Dorsolateral prefrontal cortex (tissue), 120 donors: ENCODE measurements at regions of chr5 and their contacts with region 1.

Region 1: DNA sequence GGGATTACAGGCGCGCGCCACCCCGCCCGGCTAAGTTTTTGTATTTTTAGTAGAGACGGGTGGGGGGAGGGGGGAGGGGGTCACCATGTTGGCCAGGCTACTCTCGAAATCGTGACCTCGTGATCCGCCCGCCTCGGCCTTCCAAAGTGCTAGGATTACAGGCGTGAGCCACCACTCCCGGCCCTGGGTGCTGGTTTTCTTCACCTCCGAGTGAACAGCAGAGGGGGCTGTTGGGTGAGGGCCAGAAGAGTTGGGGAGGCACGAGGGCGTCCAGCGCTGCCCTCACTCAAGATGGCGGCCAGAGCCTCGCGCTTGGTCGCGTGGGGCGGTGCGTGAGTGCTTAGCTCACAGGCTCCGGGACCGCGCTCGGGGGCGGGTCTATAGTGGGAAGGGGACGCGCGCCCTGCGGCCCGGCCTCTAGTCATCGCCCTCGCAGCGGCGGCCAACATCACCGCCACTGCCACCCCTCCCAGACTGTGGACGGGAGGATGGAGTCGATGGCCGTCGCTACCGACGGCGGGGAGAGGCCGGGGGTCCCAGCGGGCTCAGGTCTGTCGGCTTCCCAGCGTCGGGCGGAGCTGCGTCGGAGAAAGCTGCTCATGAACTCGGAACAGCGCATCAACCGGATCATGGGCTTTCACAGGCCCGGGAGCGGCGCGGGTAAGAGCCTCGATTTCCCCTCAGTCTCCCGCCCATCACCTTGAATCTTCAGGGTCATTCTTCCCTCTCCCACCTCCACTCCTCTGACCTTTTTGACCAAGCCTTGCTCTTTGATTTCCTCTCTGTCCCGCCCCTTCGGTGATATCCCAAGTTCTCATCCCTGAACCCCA is at the start of gene CAMLG:
- DNase-seq: peak; percentile 96 to 99 (median 97)
- H3K4me3 ChIP-seq: peak within 1 kb of the TSS; percentile 63 to 100 (median 94)
- H3K27ac ChIP-seq: peak within 1 kb of the TSS; percentile 78 to 98 (median 95)
- H3K27me3 ChIP-seq: no peaks in the 10 kb centered on the region
- CTCF ChIP-seq: peak in 50 of 56 donors; percentile 10 to 76 (median 47)
- total RNA-seq, gene CAMLG: 23.1 to 93.4 (median 48.1) TPM

Region 2: GRCh38 chr5:134304311-134304710 is 434.0 kb before region 1 on chr5:
- intact Hi-C with region 1: loop called in 1 of 2 experiments (anchors 10 kb)
- DNase-seq: no peak
- H3K4me3 ChIP-seq: no peak overlapping the region
- H3K27ac ChIP-seq: no peak overlapping the region
- H3K27me3 ChIP-seq: no peaks in the 10 kb centered on the region
- CTCF ChIP-seq: no peak

Region 3: DNA sequence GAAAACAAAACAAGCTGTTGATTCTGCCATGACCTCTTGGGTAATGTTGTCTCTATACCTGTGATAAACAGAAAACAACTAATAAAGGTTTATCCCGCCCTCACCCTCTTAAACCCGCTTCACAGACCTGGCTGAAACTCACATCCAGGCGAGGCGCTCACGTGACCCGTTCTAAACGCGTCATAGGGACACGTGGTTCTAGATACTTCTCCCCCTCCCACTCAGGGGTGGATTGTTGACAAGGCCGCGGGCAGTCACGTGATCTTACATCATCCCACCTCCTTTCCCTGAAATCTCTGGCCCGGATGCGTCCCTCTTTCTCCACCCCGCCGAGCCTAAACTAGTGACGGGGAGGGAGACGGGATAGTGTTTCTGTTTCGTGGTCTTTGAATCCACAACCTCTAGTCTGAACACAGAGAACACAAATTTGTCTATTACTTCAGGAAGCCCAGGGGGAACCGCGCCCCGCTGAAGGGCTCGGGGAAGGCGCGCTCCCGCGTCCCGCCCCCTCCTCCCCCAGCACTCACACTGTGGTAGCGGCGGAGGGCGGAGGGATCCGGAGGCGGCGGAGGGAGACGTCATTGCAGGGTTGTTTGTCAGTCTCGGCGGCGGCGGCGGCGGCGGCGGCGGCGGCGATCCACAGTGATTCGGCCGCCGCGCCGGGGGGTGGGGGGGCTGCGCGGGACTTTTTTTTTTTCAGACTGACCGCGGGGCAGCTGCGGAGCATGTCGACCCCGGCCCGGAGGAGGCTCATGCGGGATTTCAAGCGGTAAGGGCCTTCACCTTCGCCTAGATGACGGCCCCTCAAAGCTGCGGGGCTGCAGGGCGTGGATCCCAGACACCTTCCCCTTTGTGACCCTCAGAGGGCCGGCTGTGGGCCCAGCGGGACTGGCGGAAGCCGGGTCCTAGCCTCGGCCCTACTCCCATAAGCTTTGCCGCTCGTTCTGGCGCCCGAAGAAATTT is 367.2 kb before region 1 on chr5 and contains the start of gene UBE2B:
- intact Hi-C with region 1: loop called (anchors 5 kb)
- DNase-seq: peak; percentile 96 to 100 (median 99)
- H3K4me3 ChIP-seq: peak within 1 kb of the TSS; percentile 60 to 100 (median 98)
- H3K27ac ChIP-seq: peak within 1 kb of the TSS; percentile 82 to 100 (median 99)
- H3K27me3 ChIP-seq: no peaks in the 10 kb centered on the region
- CTCF ChIP-seq: peak in 14 of 56 donors; percentile 2 to 35 (median 19)
- total RNA-seq, gene UBE2B: 45.5 to 171 (median 102) TPM

Region 4: GRCh38 chr5:134758504-134759341 is 20.4 kb after region 1 on chr5 and contains the start of gene DDX46:
- intact Hi-C with region 1: loop called in 1 of 2 experiments (anchors 2 kb)
- DNase-seq: peak; percentile 81 to 96 (median 91)
- H3K4me3 ChIP-seq: peak within 1 kb of the TSS; percentile 68 to 99 (median 90)
- H3K27ac ChIP-seq: peak within 1 kb of the TSS in 51 of 59 donors; percentile 10 to 86 (median 70)
- H3K27me3 ChIP-seq: no peaks in the 10 kb centered on the region
- CTCF ChIP-seq: peak; percentile 77 to 97 (median 89)
- total RNA-seq, gene DDX46: 39.7 to 84.6 (median 56.9) TPM

Region 5: DNA sequence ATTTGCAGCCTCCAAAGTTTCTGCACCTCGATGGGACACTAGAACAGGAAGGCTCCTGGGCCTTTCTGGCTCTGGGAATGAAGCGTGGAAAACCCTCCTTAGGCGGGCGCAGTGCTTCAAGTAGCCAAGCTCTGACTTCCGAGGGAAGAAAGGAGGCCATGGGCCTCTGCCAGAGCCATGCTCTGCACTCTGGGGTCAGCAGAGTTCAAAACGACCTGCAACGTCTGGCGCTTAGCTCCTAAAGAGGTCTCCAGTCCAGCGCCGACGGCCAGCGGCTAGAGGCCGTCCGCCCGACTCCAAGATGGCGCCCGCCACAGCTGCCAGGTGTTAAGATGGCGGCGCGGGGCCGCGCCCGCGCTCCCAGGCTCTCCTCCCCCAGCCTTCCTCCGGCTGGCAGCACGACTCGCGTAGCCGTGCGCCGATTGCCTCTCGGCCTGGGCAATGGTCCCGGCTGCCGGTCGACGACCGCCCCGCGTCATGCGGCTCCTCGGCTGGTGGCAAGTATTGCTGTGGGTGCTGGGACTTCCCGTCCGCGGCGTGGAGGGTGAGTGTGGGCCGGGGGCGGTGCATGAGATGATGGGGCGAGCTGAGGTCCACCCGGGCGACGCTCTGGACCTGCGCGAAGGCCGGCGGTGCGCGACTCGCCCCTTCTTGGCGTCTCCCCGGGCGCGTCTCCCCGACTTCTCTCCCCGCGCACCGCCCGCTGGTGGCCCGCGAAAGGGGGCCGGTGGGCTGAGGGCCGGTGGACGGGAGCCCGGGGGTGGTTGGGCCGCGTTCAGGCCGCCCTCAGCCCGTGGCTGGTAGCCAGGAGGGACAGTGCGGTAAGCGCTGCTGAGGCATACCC is 135.9 kb after region 1 on chr5 and contains the start of gene TXNDC15:
- intact Hi-C with region 1: loop called in 1 of 2 experiments (anchors 2 kb)
- DNase-seq: peak; percentile 73 to 93 (median 82)
- H3K4me3 ChIP-seq: peak within 1 kb of the TSS; percentile 58 to 98 (median 92)
- H3K27ac ChIP-seq: peak within 1 kb of the TSS; percentile 87 to 100 (median 99)
- H3K27me3 ChIP-seq: no peaks in the 10 kb centered on the region
- CTCF ChIP-seq: peak in 31 of 56 donors; percentile 8 to 52 (median 27)
- total RNA-seq, gene TXNDC15: 37.3 to 84.2 (median 60.4) TPM